ENCODE measurements at regions of chr11 and their contacts with region 1.

Region 1: GRCh38 chr11:36265793-36266628 is 23.2 kb downstream of the COMMD9 start:
- DNase-seq: peak; percentile 40
- H3K4me3 ChIP-seq: no peak overlapping the region
- H3K27ac ChIP-seq: no peak overlapping the region
- H3K4me1 ChIP-seq: no peaks in the 10 kb centered on the region
- H3K27me3 ChIP-seq: peaks cover 0 to 5% of the 10 kb centered on the region in 2 experiments
- CTCF ChIP-seq: peak; percentile 86 to 89
- POLR2A ChIP-seq: no peak

Region 2: GRCh38 chr11:35485656-35486322 is 780.2 kb before region 1 on chr11:
- CTCF ChIA-PET with region 1: interaction called, 56 read pairs
- POLR2A ChIA-PET with region 1: no interaction called
- dilution Hi-C with region 1: no loop called
- intact Hi-C with region 1: loop called (anchors 1 kb)
- DNase-seq: peak; percentile 79
- H3K4me3 ChIP-seq: no peak overlapping the region
- H3K27ac ChIP-seq: no peak overlapping the region
- H3K4me1 ChIP-seq: no peaks in the 10 kb centered on the region
- H3K27me3 ChIP-seq: peaks cover 8 to 10% of the 10 kb centered on the region in 2 experiments
- CTCF ChIP-seq: peak; percentile 85 to 92
- POLR2A ChIP-seq: no peak

Region 3: GRCh38 chr11:35605711-35606110 is 660.3 kb before region 1 on chr11:
- CTCF ChIA-PET with region 1: interaction called, 11 read pairs
- POLR2A ChIA-PET with region 1: no interaction called
- dilution Hi-C with region 1: loop called (anchors 25 kb)
- intact Hi-C with region 1: no loop called
- DNase-seq: no peak
- H3K4me3 ChIP-seq: no peak overlapping the region
- H3K27ac ChIP-seq: no peak overlapping the region
- H3K4me1 ChIP-seq: no peaks in the 10 kb centered on the region
- H3K27me3 ChIP-seq: peaks cover 26 to 46% of the 10 kb centered on the region in 2 experiments
- CTCF ChIP-seq: no peak
- POLR2A ChIP-seq: no peak

Region 4: GRCh38 chr11:35800970-35801953 is 464.7 kb before region 1 on chr11:
- CTCF ChIA-PET with region 1: interaction called, 7 read pairs
- POLR2A ChIA-PET with region 1: no interaction called
- dilution Hi-C with region 1: loop called (anchors 25 kb)
- intact Hi-C with region 1: no loop called
- DNase-seq: peak; percentile 56
- H3K4me3 ChIP-seq: no peak overlapping the region
- H3K27ac ChIP-seq: no peak overlapping the region
- H3K4me1 ChIP-seq: peaks cover 29% of the 10 kb centered on the region
- H3K27me3 ChIP-seq: no peaks in the 10 kb centered on the region
- CTCF ChIP-seq: no peak
- POLR2A ChIP-seq: no peak

Region 5: DNA sequence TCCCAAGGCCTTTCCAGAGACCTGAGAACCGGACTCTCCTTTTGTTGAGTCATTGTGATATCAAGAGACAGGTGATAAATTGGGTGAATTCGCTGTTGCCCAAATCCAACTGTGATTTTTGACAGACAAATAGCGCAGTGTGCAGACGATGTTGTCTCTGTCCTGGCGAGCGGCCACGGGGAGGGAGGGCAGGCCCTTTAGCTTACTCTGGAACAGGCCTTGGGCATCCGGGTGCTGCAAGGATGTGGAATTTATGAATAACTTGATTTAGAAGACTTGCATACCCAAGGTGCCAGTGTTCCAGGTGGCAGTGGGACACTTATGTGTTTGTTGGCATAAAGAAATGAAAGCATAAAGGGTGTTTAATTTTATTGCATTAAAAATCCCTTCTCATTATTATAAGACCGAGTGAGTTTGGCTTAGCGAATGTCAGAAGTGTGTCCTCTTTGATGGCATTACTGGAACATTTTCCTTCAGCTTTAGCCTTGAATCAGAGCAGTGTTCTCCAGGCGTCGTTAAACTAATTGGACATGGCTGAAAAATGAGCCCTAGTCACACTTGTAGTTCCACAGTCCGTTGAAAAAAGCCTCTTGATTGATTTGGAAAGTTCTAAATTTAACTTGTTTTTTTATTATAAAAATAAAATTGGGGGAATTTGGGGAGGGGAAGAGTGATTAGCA is 312.8 kb before region 1 on chr11:
- CTCF ChIA-PET with region 1: interaction called, 10 read pairs
- POLR2A ChIA-PET with region 1: no interaction called
- dilution Hi-C with region 1: no loop called
- intact Hi-C with region 1: no loop called
- DNase-seq: peak; percentile 42
- H3K4me3 ChIP-seq: no peak overlapping the region
- H3K27ac ChIP-seq: peak overlapping the region; percentile 35
- H3K4me1 ChIP-seq: peaks cover 31% of the 10 kb centered on the region
- H3K27me3 ChIP-seq: no peaks in the 10 kb centered on the region
- CTCF ChIP-seq: no peak
- POLR2A ChIP-seq: no peak

Measured in endothelial cell of umbilical vein (primary cell).